ENCODE measurements at regions of chr12 and their contacts with region 1.

Region 1: DNA sequence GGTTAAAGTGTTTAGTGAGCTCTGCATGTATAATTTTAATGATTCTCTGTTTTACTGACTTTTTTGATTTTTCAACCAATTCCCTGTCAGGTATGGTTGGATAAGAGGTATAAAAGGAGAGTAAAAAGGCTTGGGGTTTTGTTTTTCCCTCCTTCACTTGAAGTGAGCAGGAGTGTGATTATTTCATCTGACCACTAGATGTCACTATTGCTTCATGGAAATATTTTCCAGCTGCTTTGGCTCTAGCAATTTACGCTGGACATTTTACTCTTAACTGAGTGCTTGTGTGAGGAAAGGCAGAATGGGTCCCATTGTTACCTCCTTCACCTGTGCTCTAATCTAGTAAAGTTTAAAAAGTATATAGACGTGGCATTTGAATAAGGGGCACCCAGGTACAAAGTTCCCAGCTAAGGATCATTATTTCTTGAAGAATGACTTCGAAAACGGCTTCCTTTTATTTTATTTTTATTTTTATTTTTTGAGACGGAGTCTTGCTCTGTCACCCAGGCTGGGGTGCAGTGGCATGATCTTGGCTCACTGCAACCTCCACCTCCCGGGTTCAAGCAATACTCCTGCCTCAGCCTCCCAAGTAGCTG is 66.5 kb downstream of the TBC1D30 start:
- H3K4me3 ChIP-seq: no peak overlapping the region
- H3K27ac ChIP-seq: no peak overlapping the region
- H3K4me1 ChIP-seq: peaks cover 5% of the 10 kb centered on the region; the same call in 1 of the 2 replicates
- CTCF ChIP-seq: peak; percentile 61

Region 2: GRCh38 chr12:64756376-64756775 is 134.6 kb before region 1 on chr12:
- CTCF ChIA-PET with region 1: no interaction called
- POLR2A ChIA-PET with region 1: no interaction called
- H3K4me3 ChIP-seq: no peak overlapping the region
- H3K27ac ChIP-seq: no peak overlapping the region
- H3K4me1 ChIP-seq: no peaks in the 10 kb centered on the region
- CTCF ChIP-seq: no peak

Region 3: DNA sequence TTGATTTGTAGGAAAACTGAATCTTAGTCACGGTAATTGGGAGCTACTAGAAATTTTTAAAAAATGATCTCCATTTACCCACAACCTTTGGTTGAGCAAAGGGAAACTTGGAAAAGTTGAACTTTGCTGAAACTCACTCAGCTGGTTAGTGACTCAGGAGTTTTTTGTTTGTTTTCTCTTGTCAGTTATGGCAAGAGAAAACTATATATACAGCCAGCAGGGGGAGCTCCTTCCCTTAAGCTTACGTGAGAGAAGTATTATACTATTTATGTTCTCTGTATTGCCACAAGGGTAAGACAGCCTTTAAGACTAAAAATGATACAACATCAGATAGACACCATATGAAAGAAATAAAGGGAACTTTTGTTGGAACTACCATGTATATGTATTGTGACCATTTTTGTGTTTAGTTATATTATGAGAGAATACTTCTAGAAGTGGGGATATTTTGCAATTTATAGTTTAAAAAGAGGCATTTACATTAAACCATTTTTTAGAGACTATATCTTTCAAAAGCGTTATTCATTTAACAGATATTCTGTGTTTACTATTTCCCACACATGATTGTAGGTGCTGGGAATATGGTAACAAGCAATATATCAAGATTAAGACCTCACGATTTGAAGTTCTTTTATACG is 94.6 kb before region 1 on chr12:
- CTCF ChIA-PET with region 1: interaction called, 20 read pairs
- POLR2A ChIA-PET with region 1: interaction called, 5 read pairs
- H3K4me3 ChIP-seq: no peak overlapping the region
- H3K27ac ChIP-seq: no peak overlapping the region
- H3K4me1 ChIP-seq: no peaks in the 10 kb centered on the region
- CTCF ChIP-seq: peak; percentile 51

Region 4: GRCh38 chr12:64801381-64801780 is 89.6 kb before region 1 on chr12:
- CTCF ChIA-PET with region 1: interaction called, 20 read pairs
- POLR2A ChIA-PET with region 1: no interaction called
- H3K4me3 ChIP-seq: no peak overlapping the region
- H3K27ac ChIP-seq: no peak overlapping the region
- H3K4me1 ChIP-seq: 0 out of 2 replicates have a peak, but pooled peaks cover 2% of the 10 kb centered on the region
- CTCF ChIP-seq: peak; percentile 49; the same call in 1 of the 2 replicates

Region 5: GRCh38 chr12:65100140-65100539 is 209.2 kb after region 1 on chr12:
- CTCF ChIA-PET with region 1: interaction called, 10 read pairs
- POLR2A ChIA-PET with region 1: no interaction called
- H3K4me3 ChIP-seq: no peak overlapping the region
- H3K27ac ChIP-seq: no peak overlapping the region
- H3K4me1 ChIP-seq: no peaks in the 10 kb centered on the region
- CTCF ChIP-seq: no peak

Region 6: GRCh38 chr12:65106948-65107347 is 216.0 kb after region 1 on chr12:
- CTCF ChIA-PET with region 1: interaction called, 13 read pairs
- POLR2A ChIA-PET with region 1: no interaction called
- H3K4me3 ChIP-seq: no peak overlapping the region
- H3K27ac ChIP-seq: no peak overlapping the region
- H3K4me1 ChIP-seq: no peaks in the 10 kb centered on the region
- CTCF ChIP-seq: no peak

Region 7: GRCh38 chr12:65121049-65121955 is 230.3 kb after region 1 on chr12 and contains the start of gene WIF1:
- CTCF ChIA-PET with region 1: interaction called, 22 read pairs
- POLR2A ChIA-PET with region 1: no interaction called
- H3K4me3 ChIP-seq: peak within 1 kb of the TSS; percentile 34
- H3K27ac ChIP-seq: no peak within 1 kb of the TSS; the same call in 1 of the 2 replicates
- H3K4me1 ChIP-seq: peaks cover 7% of the 10 kb centered on the region
- CTCF ChIP-seq: peak; percentile 29; the same call in 1 of the 2 replicates

Region 8: GRCh38 chr12:65232476-65233077 is 341.6 kb after region 1 on chr12:
- CTCF ChIA-PET with region 1: interaction called, 19 read pairs
- POLR2A ChIA-PET with region 1: no interaction called
- H3K4me3 ChIP-seq: no peak overlapping the region
- H3K27ac ChIP-seq: no peak overlapping the region
- H3K4me1 ChIP-seq: peaks cover 10% of the 10 kb centered on the region; the same call in 1 of the 2 replicates
- CTCF ChIP-seq: no peak

Measured in HEK293 (cell line).